ENCODE measurements at regions of chr15 and their contacts with region 1.

Region 1: GRCh38 chr15:43185157-43186017 is at the start of gene CCNDBP1:
- DNase-seq: peak; percentile 99
- total RNA-seq, gene CCNDBP1: 56.6 TPM

Region 2: GRCh38 chr15:43105778-43106485 is 79.5 kb before region 1 on chr15 and contains the start of gene UBR1:
- intact Hi-C with region 1: loop called (anchors 5 kb)
- DNase-seq: peak; percentile 94
- total RNA-seq, gene UBR1: 34.6 TPM

Region 3: GRCh38 chr15:43133430-43134156 is 51.8 kb before region 1 on chr15 and contains the start of gene TMEM62:
- intact Hi-C with region 1: loop called (anchors 5 kb)
- DNase-seq: peak; percentile 93
- total RNA-seq, gene TMEM62: 9.3 TPM

Region 4: GRCh38 chr15:43316016-43316970 is 130.9 kb after region 1 on chr15:
- intact Hi-C with region 1: no loop called
- DNase-seq: no peak

Measured in cardiac septum (tissue), 1 donor.